Transverse colon (tissue), 4 donors: ENCODE measurements at regions of chr15 and their contacts with region 1.

Region 1: GRCh38 chr15:94728161-94728560 is 496.8 kb downstream of the MCTP2 start:
- DNase-seq: no peak
- H3K4me3 ChIP-seq: no peak overlapping the region
- H3K27ac ChIP-seq: no peak overlapping the region
- H3K4me1 ChIP-seq: no peaks in the 10 kb centered on the region
- H3K27me3 ChIP-seq: no peaks in the 10 kb centered on the region
- CTCF ChIP-seq: no peak
- EP300 ChIP-seq: no peak
- POLR2A ChIP-seq: no peak

Region 2: GRCh38 chr15:94230956-94231722 is 497.0 kb before region 1 on chr15 and contains the start of gene MCTP2:
- in situ Hi-C with region 1: no loop called
- intact Hi-C with region 1: no loop called
- DNase-seq: peak; percentile 93
- H3K4me3 ChIP-seq: peak within 1 kb of the TSS; percentile 34 to 81 (median 67)
- H3K27ac ChIP-seq: peak within 1 kb of the TSS; percentile 88 to 94 (median 90)
- H3K4me1 ChIP-seq: peaks cover 0 to 51% (median 25%) of the 10 kb centered on the region in 4 donors
- H3K27me3 ChIP-seq: no peaks in the 10 kb centered on the region
- CTCF ChIP-seq: peak in 3 of 5 experiments; percentile 5 to 27 (median 17)
- EP300 ChIP-seq: no peak
- POLR2A ChIP-seq: peak; percentile 81
- total RNA-seq, gene MCTP2: 108 to 409 (median 144) TPM

Region 3: DNA sequence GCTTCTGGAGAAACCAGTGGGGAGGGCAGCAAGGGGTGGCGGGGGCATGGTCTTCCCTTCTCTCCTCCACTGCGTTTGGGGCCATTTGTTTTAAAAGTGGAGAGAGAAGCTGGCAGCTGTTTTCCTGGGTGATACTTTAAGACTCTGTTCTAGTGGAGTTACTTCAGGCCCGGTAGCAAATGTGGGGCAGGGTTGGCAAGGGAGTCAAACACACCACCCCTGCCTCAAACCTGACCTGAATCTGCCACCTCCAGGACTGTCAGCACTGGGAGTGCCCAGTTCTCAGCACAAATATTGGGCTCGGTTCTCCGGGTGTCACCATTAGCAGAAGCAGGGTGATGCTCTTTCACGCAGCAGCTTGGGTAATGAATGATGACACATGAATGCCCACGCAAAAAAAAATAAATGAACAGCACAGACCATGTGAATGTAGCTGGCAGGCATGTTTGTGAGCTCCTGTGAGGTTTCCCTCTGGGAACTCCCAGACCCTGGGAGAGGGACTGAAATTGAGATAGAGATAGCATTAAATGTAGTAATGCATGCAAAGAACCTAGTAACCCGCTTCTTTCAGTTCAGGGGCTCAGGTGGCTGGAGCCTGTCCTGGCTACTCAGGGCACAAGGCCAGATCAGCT is 72.8 kb before region 1 on chr15:
- in situ Hi-C with region 1: no loop called
- intact Hi-C with region 1: no loop called
- DNase-seq: no peak
- H3K4me3 ChIP-seq: no peak overlapping the region
- H3K27ac ChIP-seq: no peak overlapping the region
- H3K4me1 ChIP-seq: no peaks in the 10 kb centered on the region
- H3K27me3 ChIP-seq: no peaks in the 10 kb centered on the region
- CTCF ChIP-seq: no peak
- EP300 ChIP-seq: no peak
- POLR2A ChIP-seq: no peak

Region 4: GRCh38 chr15:94739639-94740038 is 11.5 kb after region 1 on chr15:
- in situ Hi-C with region 1: no loop called
- intact Hi-C with region 1: loop called (anchors 1 kb)
- DNase-seq: no peak
- H3K4me3 ChIP-seq: no peak overlapping the region
- H3K27ac ChIP-seq: no peak overlapping the region
- H3K4me1 ChIP-seq: no peaks in the 10 kb centered on the region
- H3K27me3 ChIP-seq: no peaks in the 10 kb centered on the region
- CTCF ChIP-seq: no peak
- EP300 ChIP-seq: no peak
- POLR2A ChIP-seq: no peak